Heart right ventricle (tissue), 16 donors: ENCODE measurements at regions of chr17 and their contacts with region 1.

Region 1: DNA sequence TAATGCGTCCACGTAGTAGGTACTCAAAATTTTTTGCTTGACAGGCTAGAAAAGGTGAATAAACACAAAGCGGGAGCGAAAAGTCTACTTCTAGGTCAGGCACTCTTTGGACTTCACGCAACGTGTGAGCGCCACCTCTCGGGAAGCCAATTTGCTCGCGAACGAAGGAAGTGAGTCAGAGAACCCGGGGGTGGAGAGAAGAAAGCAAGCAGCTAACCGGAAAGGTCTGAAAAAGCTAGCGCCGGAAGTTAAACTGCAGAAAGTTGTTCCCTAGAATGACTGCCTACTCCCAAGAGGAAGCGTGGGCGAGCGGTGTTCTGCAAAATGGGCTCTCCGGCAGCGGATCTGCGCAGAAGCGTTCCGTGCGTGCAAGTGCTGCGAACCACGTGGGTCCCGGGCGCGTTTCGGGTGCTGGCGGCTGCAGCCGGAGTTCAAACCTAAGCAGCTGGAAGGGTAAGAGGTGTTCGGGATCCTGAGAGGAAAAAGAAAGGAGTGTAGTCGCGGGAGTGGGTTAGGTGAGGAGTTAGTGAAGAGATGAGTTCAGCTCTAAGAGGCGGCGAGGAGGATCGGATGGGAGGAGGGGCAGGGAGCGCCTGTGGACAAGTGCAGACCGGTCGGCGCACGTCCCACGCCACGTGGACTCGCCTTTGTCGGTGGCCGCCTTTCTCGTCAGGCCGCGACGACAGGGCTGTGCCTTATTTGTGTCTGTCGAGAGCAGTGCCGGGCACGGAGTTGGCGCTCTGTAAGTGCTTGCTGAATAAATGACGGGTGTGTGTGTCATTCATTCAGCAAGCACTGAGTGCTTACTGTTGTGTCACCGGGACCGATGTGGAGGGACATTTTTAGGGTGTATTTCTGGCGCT is at the start of gene NME1:
- DNase-seq: peak; percentile 92 to 98
- ATAC-seq: peak; percentile 96 to 99 (median 98)
- H3K4me3 ChIP-seq: peak within 1 kb of the TSS; percentile 51 to 90 (median 71)
- H3K27ac ChIP-seq: peak within 1 kb of the TSS; percentile 72 to 91 (median 82)
- H3K4me1 ChIP-seq: peaks cover 0 to 22% (median 12%) of the 10 kb centered on the region in 9 donors
- H3K27me3 ChIP-seq: no peaks in the 10 kb centered on the region
- CTCF ChIP-seq: peak; percentile 55 to 96 (median 76)
- total RNA-seq, gene NME1: 12.9 to 52.0 (median 21.8) TPM

Region 2: GRCh38 chr17:51056813-51057510 is 96.5 kb before region 1 on chr17:
- intact Hi-C with region 1: loop called in 1 of 10 experiments (anchors 1 kb)
- DNase-seq: peak in 1 of 2 donors; percentile 51
- ATAC-seq: peak; percentile 78 to 91 (median 82)
- H3K4me3 ChIP-seq: peak overlapping the region in 2 of 10 donors; percentile 1 to 9
- H3K27ac ChIP-seq: peak overlapping the region in 9 of 10 donors; percentile 49 to 76 (median 60)
- H3K4me1 ChIP-seq: peaks cover 0 to 29% (median 23%) of the 10 kb centered on the region in 9 donors
- H3K27me3 ChIP-seq: no peaks in the 10 kb centered on the region
- CTCF ChIP-seq: peak; percentile 22 to 74 (median 60)

Region 3: DNA sequence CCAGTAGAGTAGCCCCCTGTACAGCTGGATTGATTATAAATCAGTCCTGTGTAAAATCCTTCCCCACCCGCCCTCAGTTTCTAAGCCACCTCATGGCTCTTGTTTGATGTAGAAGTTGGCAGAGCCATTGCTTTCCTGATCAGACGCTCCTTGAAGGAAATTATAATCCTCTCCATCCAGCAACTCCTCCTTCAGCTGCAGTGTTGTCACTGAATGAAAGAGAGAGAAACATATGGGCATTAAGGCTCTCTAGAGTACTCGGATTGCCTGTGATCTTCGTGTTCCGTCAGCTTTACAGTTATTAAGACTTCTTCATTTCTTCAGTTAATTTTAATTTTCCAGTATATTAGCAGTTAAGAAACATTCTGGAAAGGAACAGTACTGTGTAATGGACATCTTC is 27.0 kb after region 1 on chr17:
- intact Hi-C with region 1: no loop called
- DNase-seq: no peak
- ATAC-seq: no peak
- H3K4me3 ChIP-seq: no peak overlapping the region
- H3K27ac ChIP-seq: no peak overlapping the region
- H3K4me1 ChIP-seq: no peaks in the 10 kb centered on the region
- H3K27me3 ChIP-seq: no peaks in the 10 kb centered on the region
- CTCF ChIP-seq: no peak